Natural killer cell (primary cell): ENCODE measurements at regions of chr7 and their contacts with region 1.

Region 1: GRCh38 chr7:38306171-38306570 is 32.7 kb upstream of the TARP start:
- DNase-seq: no peak
- ATAC-seq: no peak
- H3K4me3 ChIP-seq: no peak overlapping the region
- H3K4me3 Mint-ChIP-seq: peak overlapping the region; percentile 99
- H3K27ac ChIP-seq: peak overlapping the region; percentile 97
- H3K27ac Mint-ChIP-seq: peak overlapping the region; percentile 95 to 99
- H3K4me1 ChIP-seq: peaks cover 67% of the 10 kb centered on the region
- H3K4me1 Mint-ChIP-seq: peaks cover 89% of the 10 kb centered on the region in 2 donors
- H3K27me3 ChIP-seq: no peaks in the 10 kb centered on the region
- H3K27me3 Mint-ChIP-seq: no peaks in the 10 kb centered on the region
- CTCF ChIP-seq: no peak

Region 2: DNA sequence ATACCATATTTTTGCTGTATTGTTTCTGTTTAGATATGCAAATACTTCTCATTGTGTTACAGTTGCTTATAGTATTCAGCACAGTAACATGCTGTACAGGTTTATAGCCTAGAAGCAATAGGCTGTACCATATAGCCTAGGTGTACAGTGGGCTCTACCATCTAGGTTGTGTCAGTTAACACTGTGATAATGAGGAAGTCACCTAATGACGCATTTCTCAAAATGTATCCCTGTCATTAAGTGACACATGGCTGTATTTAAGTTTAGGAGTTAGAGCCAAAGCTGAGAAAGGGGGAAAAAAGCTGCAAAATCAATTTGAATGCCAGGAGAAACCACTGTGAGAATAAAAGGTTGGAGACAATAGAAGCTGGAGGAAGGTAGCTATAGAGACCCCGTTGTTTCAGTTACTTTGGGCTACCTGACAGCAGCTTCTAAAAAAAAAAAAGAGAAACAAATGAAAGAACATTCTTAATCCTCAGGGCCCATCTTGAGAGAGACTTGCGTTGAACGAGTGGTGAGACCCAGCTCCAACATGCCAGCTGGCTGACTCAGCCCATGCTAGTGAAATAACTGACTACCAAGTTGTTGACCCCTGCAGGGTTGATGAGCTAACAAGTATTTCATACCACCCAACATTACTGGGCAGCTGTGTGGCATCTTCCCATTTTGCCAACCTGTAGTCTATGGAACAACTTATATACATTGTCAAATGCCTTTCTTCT is 119.4 kb before region 1 on chr7:
- intact Hi-C with region 1: no loop called
- DNase-seq: no peak
- ATAC-seq: no peak
- H3K4me3 ChIP-seq: no peak overlapping the region
- H3K4me3 Mint-ChIP-seq: no peak overlapping the region
- H3K27ac ChIP-seq: no peak overlapping the region
- H3K27ac Mint-ChIP-seq: no peak overlapping the region
- H3K4me1 ChIP-seq: no peaks in the 10 kb centered on the region
- H3K4me1 Mint-ChIP-seq: peaks cover 53 to 68% of the 10 kb centered on the region in 2 donors
- H3K27me3 ChIP-seq: no peaks in the 10 kb centered on the region
- H3K27me3 Mint-ChIP-seq: no peaks in the 10 kb centered on the region
- CTCF ChIP-seq: no peak

Region 3: GRCh38 chr7:38224392-38224791 is 81.8 kb before region 1 on chr7:
- intact Hi-C with region 1: no loop called
- DNase-seq: no peak
- ATAC-seq: no peak
- H3K4me3 ChIP-seq: peak overlapping the region; percentile 11
- H3K4me3 Mint-ChIP-seq: peak overlapping the region; percentile 90
- H3K27ac ChIP-seq: peak overlapping the region; percentile 72
- H3K27ac Mint-ChIP-seq: peak overlapping the region; percentile 95 to 96
- H3K4me1 ChIP-seq: peaks cover 60% of the 10 kb centered on the region
- H3K4me1 Mint-ChIP-seq: peaks cover 95 to 97% of the 10 kb centered on the region in 2 donors
- H3K27me3 ChIP-seq: no peaks in the 10 kb centered on the region
- H3K27me3 Mint-ChIP-seq: no peaks in the 10 kb centered on the region
- CTCF ChIP-seq: no peak

Region 4: GRCh38 chr7:38274486-38274885 is 31.7 kb before region 1 on chr7:
- intact Hi-C with region 1: loop called (anchors 2 kb)
- DNase-seq: peak in 1 of 2 donors; percentile 38
- ATAC-seq: peak; percentile 75 to 82 (median 81)
- H3K4me3 ChIP-seq: peak overlapping the region; percentile 76
- H3K4me3 Mint-ChIP-seq: peak overlapping the region; percentile 98
- H3K27ac ChIP-seq: peak overlapping the region; percentile 100
- H3K27ac Mint-ChIP-seq: peak overlapping the region; percentile 96 to 100
- H3K4me1 ChIP-seq: peaks cover 21% of the 10 kb centered on the region
- H3K4me1 Mint-ChIP-seq: peaks cover 49 to 78% of the 10 kb centered on the region in 2 donors
- H3K27me3 ChIP-seq: no peaks in the 10 kb centered on the region
- H3K27me3 Mint-ChIP-seq: no peaks in the 10 kb centered on the region
- CTCF ChIP-seq: no peak

Region 5: GRCh38 chr7:38294926-38295325 is 11.2 kb before region 1 on chr7:
- intact Hi-C with region 1: loop called (anchors 1 kb)
- DNase-seq: no peak
- ATAC-seq: peak; percentile 72 to 86 (median 75)
- H3K4me3 ChIP-seq: no peak overlapping the region
- H3K4me3 Mint-ChIP-seq: peak overlapping the region; percentile 82
- H3K27ac ChIP-seq: peak overlapping the region; percentile 97
- H3K27ac Mint-ChIP-seq: peak overlapping the region; percentile 95 to 99
- H3K4me1 ChIP-seq: peaks cover 47% of the 10 kb centered on the region
- H3K4me1 Mint-ChIP-seq: peaks cover 69 to 73% of the 10 kb centered on the region in 2 donors
- H3K27me3 ChIP-seq: no peaks in the 10 kb centered on the region
- H3K27me3 Mint-ChIP-seq: no peaks in the 10 kb centered on the region
- CTCF ChIP-seq: no peak

Region 6: GRCh38 chr7:38318803-38319416 is 12.7 kb after region 1 on chr7:
- intact Hi-C with region 1: loop called (anchors 1 kb)
- DNase-seq: peak in 1 of 2 donors; percentile 66
- ATAC-seq: peak; percentile 26 to 56 (median 36)
- H3K4me3 ChIP-seq: peak overlapping the region; percentile 69
- H3K4me3 Mint-ChIP-seq: peak overlapping the region; percentile 97
- H3K27ac ChIP-seq: peak overlapping the region; percentile 97
- H3K27ac Mint-ChIP-seq: peak overlapping the region; percentile 95 to 99
- H3K4me1 ChIP-seq: peaks cover 65% of the 10 kb centered on the region
- H3K4me1 Mint-ChIP-seq: peaks cover 90 to 91% of the 10 kb centered on the region in 2 donors
- H3K27me3 ChIP-seq: no peaks in the 10 kb centered on the region
- H3K27me3 Mint-ChIP-seq: no peaks in the 10 kb centered on the region
- CTCF ChIP-seq: peak; percentile 77

Region 7: DNA sequence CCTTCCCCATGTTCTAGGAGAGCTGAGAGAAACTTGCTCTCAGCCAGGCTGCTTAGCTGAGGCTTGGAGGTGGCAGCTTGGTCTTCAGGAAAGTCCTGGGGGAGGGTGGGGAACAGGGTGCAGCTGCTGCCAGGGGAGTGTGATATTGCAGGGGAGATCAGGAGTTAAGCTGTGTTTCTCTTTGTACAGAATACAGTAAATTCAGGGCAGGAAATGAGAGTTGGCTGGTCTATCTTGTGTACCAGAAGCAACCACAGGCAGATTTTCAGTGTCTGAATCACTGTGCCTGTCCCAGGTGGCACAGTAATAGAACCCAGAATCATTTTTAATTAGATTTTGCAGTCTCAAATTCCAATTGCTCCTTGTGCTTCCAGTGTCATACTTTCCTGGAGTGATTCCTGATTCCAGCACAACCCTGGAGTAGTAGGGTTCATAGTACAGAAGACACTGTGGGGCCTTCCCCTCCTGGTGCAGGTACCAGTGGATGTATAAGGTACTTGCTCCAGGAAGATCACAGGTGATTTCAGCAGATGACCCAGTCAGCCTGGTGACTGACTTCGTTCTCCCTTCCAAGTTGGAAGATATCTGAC is 61.2 kb after region 1 on chr7:
- intact Hi-C with region 1: no loop called
- DNase-seq: peak in 1 of 2 donors; percentile 62
- ATAC-seq: peak in 2 of 3 donors; percentile 22 to 41
- H3K4me3 ChIP-seq: no peak overlapping the region
- H3K4me3 Mint-ChIP-seq: peak overlapping the region; percentile 7
- H3K27ac ChIP-seq: peak overlapping the region; percentile 10
- H3K27ac Mint-ChIP-seq: peak overlapping the region; percentile 54 to 89
- H3K4me1 ChIP-seq: peaks cover 48% of the 10 kb centered on the region
- H3K4me1 Mint-ChIP-seq: peaks cover 75% of the 10 kb centered on the region in 2 donors
- H3K27me3 ChIP-seq: no peaks in the 10 kb centered on the region
- H3K27me3 Mint-ChIP-seq: no peaks in the 10 kb centered on the region
- CTCF ChIP-seq: no peak

Region 8: GRCh38 chr7:38398725-38399321 is 92.7 kb after region 1 on chr7:
- intact Hi-C with region 1: no loop called
- DNase-seq: peak; percentile 36 to 77
- ATAC-seq: peak; percentile 75 to 79 (median 76)
- H3K4me3 ChIP-seq: no peak overlapping the region
- H3K4me3 Mint-ChIP-seq: no peak overlapping the region
- H3K27ac ChIP-seq: no peak overlapping the region
- H3K27ac Mint-ChIP-seq: no peak overlapping the region
- H3K4me1 ChIP-seq: peaks cover 5% of the 10 kb centered on the region
- H3K4me1 Mint-ChIP-seq: peaks cover 13 to 18% of the 10 kb centered on the region in 2 donors
- H3K27me3 ChIP-seq: no peaks in the 10 kb centered on the region
- H3K27me3 Mint-ChIP-seq: peaks cover 0 to 6% of the 10 kb centered on the region in 2 donors
- CTCF ChIP-seq: peak; percentile 96